Pancreas (tissue), 10 donors: ENCODE measurements at regions of chr11 and their contacts with region 1.

Region 1: DNA sequence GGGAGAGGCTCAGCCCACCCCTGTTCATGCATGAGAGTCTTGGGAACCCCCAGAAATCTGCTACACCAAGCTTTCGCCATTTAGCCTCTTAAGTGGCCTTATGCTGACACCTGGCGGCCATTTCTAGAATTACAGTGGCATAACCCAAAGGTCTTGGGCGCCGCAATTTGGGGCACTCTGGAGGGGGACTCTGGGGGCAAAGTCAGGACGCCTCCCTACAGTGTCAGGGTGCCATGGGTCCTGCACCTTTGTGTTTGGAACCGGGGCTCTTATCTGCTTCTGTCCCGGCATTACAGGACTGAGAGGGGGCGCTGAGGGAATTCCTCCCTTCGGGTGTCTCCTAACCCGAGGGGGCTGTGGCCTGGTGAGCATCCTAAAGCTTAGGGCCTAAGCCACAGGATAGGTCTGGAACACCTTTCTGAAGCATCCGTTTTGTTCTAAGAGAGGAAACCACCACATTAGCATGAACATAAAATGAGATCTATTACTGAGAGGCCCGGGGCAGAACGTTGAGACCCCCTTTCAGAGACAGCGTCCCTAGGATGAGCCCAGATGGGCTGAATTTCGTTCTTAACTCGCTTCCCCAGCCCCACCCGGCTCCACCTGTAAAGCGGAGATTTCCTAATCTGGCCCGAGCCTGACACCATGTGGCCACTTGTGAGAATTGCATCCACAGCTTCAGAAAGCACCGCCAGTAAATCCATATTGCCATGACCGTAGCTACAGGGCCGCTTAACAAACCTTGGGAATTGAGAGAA is 9.3 kb downstream of the INS start:
- DNase-seq: peak in 5 of 6 donors; percentile 71 to 89 (median 86)
- ATAC-seq: peak; percentile 67 to 87 (median 76)
- H3K4me3 ChIP-seq: no peak overlapping the region
- H3K27ac ChIP-seq: no peak overlapping the region
- H3K4me1 ChIP-seq: no peaks in the 10 kb centered on the region
- H3K27me3 ChIP-seq: no peaks in the 10 kb centered on the region
- CTCF ChIP-seq: peak; percentile 65 to 79 (median 73)

Region 2: DNA sequence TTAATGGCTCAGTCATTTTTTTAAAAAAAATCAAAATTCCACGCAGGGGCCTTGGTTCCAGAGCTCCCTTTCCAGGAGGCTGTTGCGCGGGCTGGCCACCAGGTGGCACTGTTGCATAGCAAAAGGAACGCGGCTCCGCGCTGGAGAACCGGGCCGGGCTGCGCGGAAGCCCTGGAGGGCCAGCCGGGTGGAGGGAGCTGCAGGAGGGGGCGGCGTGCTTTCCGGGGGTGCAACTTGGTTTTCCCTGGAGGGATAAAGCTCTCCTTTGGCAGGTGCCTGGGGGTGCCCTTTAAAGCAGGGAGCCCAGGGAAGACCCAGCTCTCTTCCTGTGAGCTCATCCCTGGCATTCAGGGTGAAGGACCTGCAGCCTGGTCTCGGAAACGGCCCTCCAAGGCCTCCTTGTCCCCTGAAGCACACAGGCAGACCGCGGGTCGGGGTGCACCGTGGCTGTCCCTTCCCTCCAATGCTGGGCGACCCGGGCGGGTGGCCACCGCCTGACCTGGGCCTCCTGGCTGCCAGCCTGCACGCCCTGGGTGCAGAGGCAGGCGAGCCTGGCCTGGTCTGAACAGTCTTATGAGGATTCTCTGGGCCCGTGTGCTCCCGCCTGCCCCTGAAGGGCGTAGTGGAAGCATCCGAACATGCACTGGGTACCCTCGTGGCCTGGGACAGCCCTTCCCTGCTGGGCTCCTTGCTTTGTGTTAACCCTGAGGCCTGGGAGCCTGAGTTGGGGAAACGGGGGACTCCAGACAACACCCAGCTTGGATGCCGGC is 498.7 kb before region 1 on chr11:
- intact Hi-C with region 1: loop called in 2 of 3 experiments (anchors 5 to 10 kb)
- DNase-seq: peak; percentile 49 to 94 (median 83)
- ATAC-seq: peak; percentile 79 to 98 (median 95)
- H3K4me3 ChIP-seq: no peak overlapping the region
- H3K27ac ChIP-seq: no peak overlapping the region
- H3K4me1 ChIP-seq: no peaks in the 10 kb centered on the region
- H3K27me3 ChIP-seq: no peaks in the 10 kb centered on the region
- CTCF ChIP-seq: peak; percentile 97 to 99 (median 98)

Region 3: GRCh38 chr11:1694064-1694845 is 457.4 kb before region 1 on chr11:
- intact Hi-C with region 1: loop called in 2 of 3 experiments (anchors 5 kb)
- DNase-seq: peak; percentile 81 to 99 (median 92)
- ATAC-seq: peak; percentile 96 to 98 (median 98)
- H3K4me3 ChIP-seq: peak overlapping the region in 2 of 4 donors; percentile 26 to 31
- H3K27ac ChIP-seq: peak overlapping the region in 1 of 4 donors; percentile 63
- H3K4me1 ChIP-seq: peaks cover 3 to 7% (median 5%) of the 10 kb centered on the region in 3 donors
- H3K27me3 ChIP-seq: peaks cover 0 to 3% (median 0%) of the 10 kb centered on the region in 4 donors
- CTCF ChIP-seq: peak; percentile 91 to 96 (median 93)

Region 4: DNA sequence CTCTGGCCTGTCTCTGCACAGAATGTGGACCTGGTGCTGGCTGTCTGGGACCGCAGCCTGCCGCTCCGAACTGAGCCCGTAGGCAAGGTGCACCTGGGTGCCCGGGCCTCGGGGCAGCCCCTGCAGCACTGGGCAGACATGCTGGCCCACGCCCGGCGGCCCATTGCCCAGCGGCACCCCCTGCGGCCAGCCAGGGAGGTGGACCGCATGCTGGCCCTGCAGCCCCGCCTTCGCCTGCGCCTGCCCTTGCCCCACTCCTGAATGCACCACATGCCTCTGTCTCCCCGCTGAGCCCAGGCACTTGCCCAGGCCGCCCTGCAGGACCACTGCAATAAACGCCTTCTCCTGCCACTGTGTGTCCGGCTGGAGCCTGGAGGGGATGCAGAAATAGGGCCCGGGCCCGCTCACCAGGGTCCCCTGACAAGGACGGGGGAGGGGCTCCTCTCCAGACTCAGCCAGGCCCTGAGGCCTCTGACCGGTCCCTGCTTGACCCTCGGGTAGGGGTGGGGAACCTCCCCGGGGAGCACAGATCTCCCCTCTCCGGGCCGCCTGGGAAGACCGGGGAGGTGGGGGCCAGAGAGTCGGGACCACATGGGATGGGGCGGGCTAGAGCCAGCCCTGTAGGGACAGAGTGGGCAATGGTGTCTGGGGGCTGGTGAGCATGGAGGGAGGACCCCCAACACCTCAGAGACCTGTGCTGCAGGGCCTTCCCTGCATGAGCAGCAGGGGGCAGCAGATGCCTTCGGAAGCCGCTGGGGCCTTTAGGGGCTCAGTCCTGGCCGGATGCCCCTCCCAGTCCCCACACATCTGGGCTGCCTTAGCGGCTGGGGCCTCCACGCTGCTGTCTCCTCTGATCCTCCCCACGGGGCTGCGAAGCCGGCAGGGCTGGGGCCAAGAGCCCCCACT is 314.3 kb before region 1 on chr11:
- intact Hi-C with region 1: loop called in 1 of 3 experiments (anchors 5 kb)
- DNase-seq: peak; percentile 43 to 86 (median 74)
- ATAC-seq: no peak
- H3K4me3 ChIP-seq: no peak overlapping the region
- H3K27ac ChIP-seq: no peak overlapping the region
- H3K4me1 ChIP-seq: peaks cover 27 to 55% (median 34%) of the 10 kb centered on the region in 3 donors
- H3K27me3 ChIP-seq: no peaks in the 10 kb centered on the region
- CTCF ChIP-seq: peak; percentile 66 to 92 (median 82)

Region 5: DNA sequence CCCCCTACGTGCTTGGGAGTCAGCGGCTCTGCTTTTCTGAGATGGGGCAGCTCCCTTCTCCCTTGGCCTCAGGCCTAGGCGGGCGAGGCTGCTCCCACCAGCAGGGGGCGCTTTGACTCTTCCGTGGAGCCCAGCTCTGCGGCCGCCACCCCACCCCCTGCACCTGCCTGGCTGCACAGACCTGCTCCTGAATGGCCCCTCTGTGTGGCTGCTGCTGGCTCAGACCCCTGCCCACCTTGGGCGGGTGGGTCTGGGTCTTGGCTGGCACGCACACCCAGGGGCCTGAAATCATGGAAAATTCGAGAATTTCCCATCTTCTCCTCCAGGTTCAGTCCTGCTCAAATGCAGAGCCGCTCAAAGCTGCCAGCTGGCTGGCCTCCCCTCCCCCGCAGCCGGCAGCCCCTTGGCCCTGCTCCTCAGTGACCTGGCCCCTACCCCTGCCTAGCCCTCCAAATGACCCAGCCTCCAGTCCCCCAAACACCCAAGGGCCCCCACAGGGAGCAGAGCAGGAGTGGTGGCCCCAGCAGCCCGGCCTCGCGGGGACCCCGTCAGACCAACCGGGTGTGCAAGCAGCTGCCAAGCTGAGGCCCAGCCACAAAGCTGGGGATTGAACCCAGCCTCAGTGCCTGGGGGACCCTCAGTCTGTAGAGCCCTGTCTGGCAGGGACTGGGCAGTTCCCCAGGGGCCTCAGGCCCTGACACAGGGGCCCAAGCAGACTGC is 269.0 kb before region 1 on chr11:
- intact Hi-C with region 1: loop called in 1 of 3 experiments (anchors 5 kb)
- DNase-seq: peak; percentile 74 to 99 (median 88)
- ATAC-seq: peak; percentile 89 to 95 (median 93)
- H3K4me3 ChIP-seq: no peak overlapping the region
- H3K27ac ChIP-seq: no peak overlapping the region
- H3K4me1 ChIP-seq: no peaks in the 10 kb centered on the region
- H3K27me3 ChIP-seq: no peaks in the 10 kb centered on the region
- CTCF ChIP-seq: peak; percentile 76 to 94 (median 91)

Region 6: DNA sequence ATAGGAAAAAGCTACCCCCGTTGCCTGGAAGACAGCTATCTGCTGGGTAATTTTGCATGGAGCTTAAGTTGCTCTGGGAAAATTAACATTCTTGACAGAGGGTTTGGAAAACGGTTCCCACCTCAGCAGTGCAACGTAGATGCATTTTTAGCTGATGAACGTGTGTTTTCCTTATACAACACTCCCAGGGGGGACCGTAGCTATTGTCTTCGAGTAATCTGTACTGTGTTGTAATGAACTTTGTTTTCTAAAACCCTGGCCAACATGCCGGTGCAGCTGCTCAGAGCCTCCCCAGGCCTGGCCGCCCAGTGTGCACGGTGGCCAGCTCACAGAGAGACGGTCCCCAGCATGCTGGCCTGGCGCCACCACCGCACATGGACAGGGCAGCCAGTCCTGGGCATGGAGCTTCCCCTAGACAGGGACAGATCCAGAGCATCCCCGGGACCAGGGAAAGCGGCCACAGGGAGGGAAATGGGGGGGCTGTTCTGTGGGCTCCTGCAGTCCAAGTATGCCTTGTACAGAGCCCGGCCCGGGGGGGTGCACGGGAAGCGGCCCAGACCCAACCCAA is 230.0 kb before region 1 on chr11:
- intact Hi-C with region 1: loop called in 1 of 3 experiments (anchors 10 kb)
- DNase-seq: peak in 3 of 6 donors; percentile 43 to 58 (median 58)
- ATAC-seq: peak in 2 of 4 donors; percentile 7 to 32
- H3K4me3 ChIP-seq: no peak overlapping the region
- H3K27ac ChIP-seq: no peak overlapping the region
- H3K4me1 ChIP-seq: no peaks in the 10 kb centered on the region
- H3K27me3 ChIP-seq: no peaks in the 10 kb centered on the region
- CTCF ChIP-seq: no peak

Region 7: GRCh38 chr11:2498750-2499149 is 347.1 kb after region 1 on chr11:
- intact Hi-C with region 1: no loop called
- DNase-seq: peak in 1 of 6 donors; percentile 24
- ATAC-seq: no peak
- H3K4me3 ChIP-seq: no peak overlapping the region
- H3K27ac ChIP-seq: no peak overlapping the region
- H3K4me1 ChIP-seq: peaks cover 0 to 3% (median 0%) of the 10 kb centered on the region in 3 donors
- H3K27me3 ChIP-seq: no peaks in the 10 kb centered on the region
- CTCF ChIP-seq: no peak